MCF 10A (cell line): ENCODE measurements at regions of chr9 and their contacts with region 1.

Region 1: GRCh38 chr9:14353222-14354056 is 39.5 kb upstream of the NFIB start:
- DNase-seq: peak; percentile 85
- H3K4me3 Mint-ChIP-seq: peak overlapping the region; percentile 56
- H3K27ac Mint-ChIP-seq: peak overlapping the region; percentile 60
- H3K4me1 Mint-ChIP-seq: peaks cover 11% of the 10 kb centered on the region
- H3K27me3 Mint-ChIP-seq: no peaks in the 10 kb centered on the region
- CTCF ChIP-seq: peak; percentile 84

Region 2: DNA sequence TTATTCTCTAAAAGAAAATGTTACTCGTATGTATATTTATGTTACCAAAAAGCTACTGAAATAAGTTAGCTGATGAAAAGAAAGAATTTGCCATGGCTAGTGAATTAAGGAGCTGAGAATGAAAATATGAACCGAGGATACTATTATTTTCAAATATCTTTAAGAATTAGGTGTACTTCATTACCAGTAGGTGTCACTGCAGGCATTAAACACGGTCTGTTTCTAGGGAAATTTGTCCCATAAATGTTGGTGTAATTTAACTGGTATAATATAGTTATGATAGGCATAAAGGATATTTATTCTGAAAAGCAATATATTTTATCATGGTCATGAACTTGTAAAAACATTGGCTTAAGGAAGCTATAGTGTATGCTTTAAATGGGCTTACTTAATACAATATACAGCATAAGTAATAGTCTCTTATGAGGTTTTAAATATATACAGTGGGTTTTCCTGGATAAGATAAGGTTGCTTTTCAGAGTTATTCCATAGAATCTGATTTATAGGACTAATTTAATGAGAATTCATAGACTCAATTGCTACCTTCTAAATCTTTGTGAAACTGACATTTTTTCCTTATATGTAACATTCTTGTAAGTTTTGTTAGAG is 1001.6 kb before region 1 on chr9:
- CTCF ChIA-PET with region 1: interaction called, 30 read pairs
- POLR2A ChIA-PET with region 1: no interaction called
- intact Hi-C with region 1: loop called (anchors 5 kb)
- DNase-seq: peak; percentile 61
- H3K4me3 Mint-ChIP-seq: no peak overlapping the region
- H3K27ac Mint-ChIP-seq: no peak overlapping the region
- H3K4me1 Mint-ChIP-seq: no peaks in the 10 kb centered on the region
- H3K27me3 Mint-ChIP-seq: no peaks in the 10 kb centered on the region
- CTCF ChIP-seq: peak; percentile 45

Region 3: DNA sequence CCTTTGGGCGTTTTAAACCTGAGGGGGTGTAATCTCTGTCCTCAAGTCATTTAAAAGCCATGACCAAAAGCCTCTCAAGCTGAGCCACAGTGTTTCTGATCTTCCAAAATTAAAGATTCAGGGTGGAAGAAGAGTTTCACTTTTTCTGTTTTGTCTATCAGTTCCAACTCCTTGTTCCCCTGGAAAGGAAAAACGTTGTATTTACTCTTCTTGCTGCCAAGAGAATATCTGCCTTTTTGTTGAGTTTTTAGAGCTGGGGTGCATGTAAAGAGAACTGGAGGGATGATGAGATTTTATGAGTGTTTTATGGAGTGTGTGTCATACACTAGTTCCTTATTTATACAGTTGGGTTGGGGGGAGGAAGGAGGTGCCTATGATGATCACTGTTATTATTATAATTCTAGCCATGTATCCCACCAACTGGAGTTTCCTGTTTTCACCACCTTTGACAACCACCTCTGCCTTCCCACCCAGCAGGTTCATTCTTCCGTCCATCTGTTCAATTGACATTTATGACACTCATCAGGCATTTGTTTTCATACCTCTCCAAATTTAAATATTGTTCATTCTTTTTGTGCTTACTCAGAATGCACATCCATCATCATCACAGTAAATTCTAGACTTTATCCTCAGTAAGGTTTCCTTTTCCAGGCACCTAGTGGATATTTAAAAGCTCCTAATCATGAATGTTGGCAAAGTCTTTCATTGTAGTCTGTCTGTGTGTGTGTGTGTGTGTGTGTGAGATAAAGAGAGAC is 976.1 kb before region 1 on chr9:
- CTCF ChIA-PET with region 1: no interaction called
- POLR2A ChIA-PET with region 1: no interaction called
- intact Hi-C with region 1: no loop called
- DNase-seq: no peak
- H3K4me3 Mint-ChIP-seq: no peak overlapping the region
- H3K27ac Mint-ChIP-seq: no peak overlapping the region
- H3K4me1 Mint-ChIP-seq: no peaks in the 10 kb centered on the region
- H3K27me3 Mint-ChIP-seq: no peaks in the 10 kb centered on the region
- CTCF ChIP-seq: no peak

Region 4: DNA sequence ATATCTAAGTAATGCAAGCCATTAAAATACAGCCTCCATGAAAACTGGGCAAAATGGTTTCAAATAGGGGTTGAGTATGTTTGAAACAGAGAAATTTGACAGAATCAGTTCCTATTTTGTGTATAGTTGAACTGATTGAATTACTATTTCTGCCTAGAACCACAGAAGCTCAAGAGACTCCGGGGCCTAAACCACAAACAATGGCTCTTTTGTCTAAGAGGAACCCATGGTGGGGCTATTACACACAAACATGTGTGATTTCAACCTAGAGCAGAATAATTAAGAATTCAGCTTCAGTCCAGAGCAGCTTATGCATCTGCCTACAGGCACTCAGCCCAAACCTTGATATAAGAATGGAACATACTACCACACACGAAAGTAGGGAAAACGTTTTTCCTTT is 902.7 kb before region 1 on chr9:
- CTCF ChIA-PET with region 1: interaction called, 14 read pairs
- POLR2A ChIA-PET with region 1: no interaction called
- intact Hi-C with region 1: loop called (anchors 1 kb)
- DNase-seq: no peak
- H3K4me3 Mint-ChIP-seq: no peak overlapping the region
- H3K27ac Mint-ChIP-seq: no peak overlapping the region
- H3K4me1 Mint-ChIP-seq: peaks cover 6% of the 10 kb centered on the region
- H3K27me3 Mint-ChIP-seq: no peaks in the 10 kb centered on the region
- CTCF ChIP-seq: no peak

Region 5: DNA sequence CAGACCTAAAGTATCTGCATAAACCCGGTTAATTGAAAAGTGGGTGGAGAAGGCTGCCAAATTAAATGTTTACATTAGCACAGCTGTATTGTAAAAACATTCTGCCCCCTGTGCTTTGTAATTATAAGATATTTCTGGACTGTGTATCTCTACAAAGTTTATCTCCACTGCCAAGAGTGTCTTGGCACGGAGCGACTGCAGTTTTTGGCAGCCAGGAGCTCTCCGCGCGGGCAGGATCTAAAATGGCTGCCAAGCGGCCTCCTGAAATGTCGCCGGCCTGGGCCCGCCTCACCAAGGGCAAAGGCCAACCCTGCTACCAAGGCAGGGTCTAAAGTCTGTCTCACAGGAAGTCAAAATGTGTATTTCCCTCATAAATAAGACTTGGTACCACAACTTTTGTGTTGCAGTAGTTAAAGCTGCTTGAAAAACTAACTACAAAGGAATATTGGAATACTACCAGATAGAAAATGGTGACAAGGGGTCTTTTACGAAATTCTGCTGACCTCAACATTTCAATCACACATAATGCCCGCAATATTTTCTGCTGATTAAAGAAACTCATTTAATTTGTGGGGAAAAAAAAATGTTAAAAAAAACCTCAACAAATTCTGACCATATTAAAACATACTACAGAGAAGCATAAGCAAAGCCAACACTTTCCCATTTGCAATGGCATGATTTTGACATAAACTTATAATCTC is 149.9 kb before region 1 on chr9:
- CTCF ChIA-PET with region 1: no interaction called
- POLR2A ChIA-PET with region 1: no interaction called
- intact Hi-C with region 1: no loop called
- DNase-seq: no peak
- H3K4me3 Mint-ChIP-seq: no peak overlapping the region
- H3K27ac Mint-ChIP-seq: no peak overlapping the region
- H3K4me1 Mint-ChIP-seq: peaks cover 43% of the 10 kb centered on the region
- H3K27me3 Mint-ChIP-seq: no peaks in the 10 kb centered on the region
- CTCF ChIP-seq: no peak

Region 6: GRCh38 chr9:14309403-14309802 is 44.0 kb before region 1 on chr9:
- CTCF ChIA-PET with region 1: interaction called, 11 read pairs
- POLR2A ChIA-PET with region 1: no interaction called
- intact Hi-C with region 1: loop called (anchors 5 kb)
- DNase-seq: no peak
- H3K4me3 Mint-ChIP-seq: peak overlapping the region; percentile 80
- H3K27ac Mint-ChIP-seq: peak overlapping the region; percentile 88
- H3K4me1 Mint-ChIP-seq: peaks cover 38% of the 10 kb centered on the region
- H3K27me3 Mint-ChIP-seq: no peaks in the 10 kb centered on the region
- CTCF ChIP-seq: no peak

Region 7: DNA sequence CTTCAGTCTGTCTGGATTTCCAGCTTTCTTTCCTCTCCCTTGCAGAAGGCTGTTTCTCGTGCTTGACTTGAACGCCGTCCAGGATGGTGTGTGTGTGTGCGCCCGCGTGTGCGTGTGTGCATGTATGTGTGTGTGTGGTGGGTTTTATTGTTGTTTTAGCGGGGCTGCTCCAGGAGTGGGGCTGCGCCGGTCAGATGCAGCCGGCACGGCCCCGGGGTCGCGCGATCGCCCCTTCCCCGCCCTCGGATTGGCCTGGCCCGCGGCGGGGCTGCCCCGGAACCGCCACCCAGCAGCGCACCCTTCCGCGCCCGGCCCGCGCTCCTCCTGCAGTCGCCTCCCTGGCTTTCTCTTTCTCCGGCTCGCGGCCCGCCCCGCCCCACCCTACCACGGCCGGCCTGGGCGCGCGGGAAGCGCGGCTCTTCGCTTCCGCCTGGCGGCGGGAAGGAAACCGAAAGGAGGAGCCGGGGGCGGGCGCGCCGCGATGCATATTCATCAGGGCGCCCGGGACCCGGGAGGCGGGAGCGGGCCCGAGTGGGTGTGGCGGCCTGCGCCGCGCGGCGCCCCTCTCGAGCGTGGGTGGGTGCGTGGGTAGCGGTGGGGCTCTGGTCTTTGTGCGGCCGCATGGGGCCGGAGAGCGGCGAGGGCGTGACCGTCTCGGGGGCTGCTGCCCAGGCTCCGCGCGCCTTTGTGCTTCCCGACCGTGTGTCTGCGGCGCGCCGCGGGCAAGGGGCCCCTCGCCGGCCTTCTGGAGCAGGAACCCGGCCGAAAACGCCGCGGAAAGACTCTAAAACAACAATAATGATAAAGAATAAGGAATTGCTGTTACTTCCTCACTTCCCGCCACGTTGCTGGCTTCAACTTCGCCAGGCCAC is 31.0 kb before region 1 on chr9:
- CTCF ChIA-PET with region 1: interaction called, 35 read pairs
- POLR2A ChIA-PET with region 1: interaction called, 4 read pairs
- intact Hi-C with region 1: loop called (anchors 2 kb)
- DNase-seq: peak; percentile 94
- H3K4me3 Mint-ChIP-seq: peak overlapping the region; percentile 86
- H3K27ac Mint-ChIP-seq: peak overlapping the region; percentile 81
- H3K4me1 Mint-ChIP-seq: peaks cover 56% of the 10 kb centered on the region
- H3K27me3 Mint-ChIP-seq: no peaks in the 10 kb centered on the region
- CTCF ChIP-seq: peak; percentile 38

Region 8: GRCh38 chr9:14372437-14373335 is 19.2 kb after region 1 on chr9:
- CTCF ChIA-PET with region 1: interaction called, 16 read pairs
- POLR2A ChIA-PET with region 1: interaction called, 4 read pairs
- intact Hi-C with region 1: no loop called
- DNase-seq: peak; percentile 81
- H3K4me3 Mint-ChIP-seq: no peak overlapping the region
- H3K27ac Mint-ChIP-seq: peak overlapping the region; percentile 57
- H3K4me1 Mint-ChIP-seq: peaks cover 7% of the 10 kb centered on the region
- H3K27me3 Mint-ChIP-seq: no peaks in the 10 kb centered on the region
- CTCF ChIP-seq: no peak

Region 9: GRCh38 chr9:14428781-14429230 is 75.4 kb after region 1 on chr9:
- CTCF ChIA-PET with region 1: interaction called, 18 read pairs
- POLR2A ChIA-PET with region 1: no interaction called
- intact Hi-C with region 1: no loop called
- DNase-seq: peak; percentile 73
- H3K4me3 Mint-ChIP-seq: no peak overlapping the region
- H3K27ac Mint-ChIP-seq: no peak overlapping the region
- H3K4me1 Mint-ChIP-seq: peaks cover 7% of the 10 kb centered on the region
- H3K27me3 Mint-ChIP-seq: no peaks in the 10 kb centered on the region
- CTCF ChIP-seq: peak; percentile 75

Region 10: DNA sequence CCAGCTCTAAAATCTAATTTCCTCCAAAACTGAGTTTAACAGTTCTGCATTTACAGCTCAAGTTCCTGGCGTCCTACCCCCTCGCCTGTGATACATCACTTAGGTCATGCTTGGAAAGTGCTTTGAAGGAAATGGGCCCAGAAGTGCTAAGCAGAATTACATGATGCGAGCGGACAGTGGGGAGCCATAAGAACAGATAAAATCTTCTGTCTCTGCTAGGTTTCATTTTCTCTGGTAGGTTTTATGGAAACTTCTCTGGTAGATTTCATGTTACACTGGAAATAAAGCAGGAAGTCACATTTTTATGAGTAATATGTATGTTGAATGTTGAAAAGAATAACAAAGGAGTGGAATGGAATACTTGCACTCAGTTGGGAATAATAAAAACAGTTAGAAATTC is 201.4 kb after region 1 on chr9:
- CTCF ChIA-PET with region 1: no interaction called
- POLR2A ChIA-PET with region 1: no interaction called
- intact Hi-C with region 1: no loop called
- DNase-seq: no peak
- H3K4me3 Mint-ChIP-seq: no peak overlapping the region
- H3K27ac Mint-ChIP-seq: no peak overlapping the region
- H3K4me1 Mint-ChIP-seq: no peaks in the 10 kb centered on the region
- H3K27me3 Mint-ChIP-seq: peaks cover 7% of the 10 kb centered on the region
- CTCF ChIP-seq: no peak

Region 11: GRCh38 chr9:14752271-14752670 is 398.8 kb after region 1 on chr9:
- CTCF ChIA-PET with region 1: no interaction called
- POLR2A ChIA-PET with region 1: no interaction called
- intact Hi-C with region 1: no loop called
- DNase-seq: no peak
- H3K4me3 Mint-ChIP-seq: no peak overlapping the region
- H3K27ac Mint-ChIP-seq: no peak overlapping the region
- H3K4me1 Mint-ChIP-seq: no peaks in the 10 kb centered on the region
- H3K27me3 Mint-ChIP-seq: peaks cover 71% of the 10 kb centered on the region
- CTCF ChIP-seq: no peak